Activated CD4-positive, alpha-beta memory T cell treated with anti-CD3 and anti-CD28 coated beads for 36 hours (primary cell): ENCODE measurements at regions of chr3 and their contacts with region 1.

Region 1: GRCh38 chr3:49786241-49786958 is at the start of gene IP6K1:
- DNase-seq: peak; percentile 100
- H3K4me3 Mint-ChIP-seq: peak within 1 kb of the TSS; percentile 83
- H3K27ac Mint-ChIP-seq: peak within 1 kb of the TSS; percentile 89
- H3K4me1 Mint-ChIP-seq: peaks cover 21% of the 10 kb centered on the region
- H3K27me3 Mint-ChIP-seq: no peaks in the 10 kb centered on the region
- total RNA-seq, gene IP6K1: 28.8 to 29.3 TPM

Region 2: GRCh38 chr3:49723628-49724551 is 62.5 kb before region 1 on chr3 and contains the start of gene GMPPB:
- CTCF ChIA-PET with region 1: no interaction called
- POLR2A ChIA-PET with region 1: interaction called, 3 read pairs
- intact Hi-C with region 1: loop called (anchors 2 kb)
- DNase-seq: peak; percentile 97
- H3K4me3 Mint-ChIP-seq: peak within 1 kb of the TSS; percentile 96
- H3K27ac Mint-ChIP-seq: peak within 1 kb of the TSS; percentile 98
- H3K4me1 Mint-ChIP-seq: peaks cover 29% of the 10 kb centered on the region
- H3K27me3 Mint-ChIP-seq: no peaks in the 10 kb centered on the region
- total RNA-seq, gene GMPPB: 41.0 to 45.4 TPM

Region 3: DNA sequence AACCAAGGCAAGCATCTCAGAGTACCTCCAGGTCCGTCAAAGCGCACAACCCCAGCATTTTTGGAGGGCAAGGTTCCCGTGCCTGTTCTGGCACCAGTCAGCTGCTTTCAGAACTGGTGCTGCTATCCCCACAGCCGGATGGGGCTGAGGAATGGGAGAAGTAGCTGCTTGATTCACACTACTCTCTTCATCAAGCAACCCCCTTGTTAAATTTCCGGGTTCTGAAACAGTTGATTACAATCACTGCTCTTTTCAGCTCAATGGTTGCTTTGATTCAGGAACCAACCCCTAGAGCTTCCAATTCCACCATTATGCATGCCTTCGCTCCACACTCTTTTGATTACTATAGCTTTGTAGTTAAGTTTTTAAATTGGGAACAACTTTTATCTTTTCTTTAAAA is 39.6 kb after region 1 on chr3:
- CTCF ChIA-PET with region 1: no interaction called
- POLR2A ChIA-PET with region 1: no interaction called
- intact Hi-C with region 1: no loop called
- DNase-seq: no peak
- H3K4me3 Mint-ChIP-seq: no peak overlapping the region
- H3K27ac Mint-ChIP-seq: no peak overlapping the region
- H3K4me1 Mint-ChIP-seq: no peaks in the 10 kb centered on the region
- H3K27me3 Mint-ChIP-seq: no peaks in the 10 kb centered on the region